ENCODE measurements at regions of chr1 and their contacts with region 1.

Region 1: DNA sequence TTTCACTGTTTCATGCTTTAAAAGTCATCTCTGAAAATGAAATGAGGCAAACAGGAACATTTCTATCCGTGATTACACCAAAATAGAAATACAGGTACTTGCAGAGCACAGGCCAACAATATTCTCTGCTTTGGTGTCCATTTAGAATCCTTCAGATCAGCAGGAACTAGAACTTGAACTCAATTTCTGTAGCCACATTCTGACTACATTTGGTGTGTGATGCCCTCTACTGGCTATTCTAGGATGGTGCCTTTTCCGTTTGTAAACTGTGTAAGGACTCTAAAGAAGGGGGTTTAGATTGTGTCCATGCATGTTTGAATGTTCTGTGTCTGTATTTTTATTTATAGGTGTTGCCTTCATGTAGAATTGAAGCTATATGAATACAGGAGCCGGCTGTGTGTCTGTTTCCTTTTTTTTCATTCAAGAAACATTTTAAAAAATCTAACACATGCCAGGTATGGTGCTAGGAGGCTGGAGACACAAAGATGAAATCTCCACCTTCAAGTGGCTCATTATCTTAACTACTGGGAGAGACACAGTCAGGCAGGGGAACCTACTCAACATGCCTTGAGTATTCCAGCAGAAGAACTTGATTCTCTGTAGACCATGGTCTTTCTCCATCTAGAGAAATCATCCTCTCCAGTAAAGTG is 7.6 kb upstream of the ZNF326 start:
- DNase-seq: peak; percentile 65 to 76
- H3K4me3 ChIP-seq: no peak overlapping the region
- H3K4me1 ChIP-seq: peaks cover 8% of the 10 kb centered on the region
- H3K27me3 ChIP-seq: no peaks in the 10 kb centered on the region

Region 2: DNA sequence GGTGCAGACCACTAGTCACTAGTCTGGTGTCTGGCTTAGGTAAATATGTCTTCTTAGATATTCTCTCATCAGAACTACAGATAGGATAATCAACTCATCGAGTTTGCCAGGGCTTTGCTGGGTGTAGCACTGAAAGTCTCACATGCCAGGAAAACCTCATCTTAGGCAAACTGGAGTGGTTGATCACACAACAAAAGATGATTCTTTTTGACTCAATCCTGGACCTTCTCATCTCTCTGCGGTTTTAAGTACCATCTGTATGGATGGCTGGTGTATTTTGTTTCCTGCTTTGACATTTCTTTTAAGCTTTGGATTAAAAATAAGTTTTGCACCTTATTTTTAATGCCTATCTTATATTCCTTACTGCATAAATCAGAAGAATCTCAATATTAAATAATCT is 872.6 kb before region 1 on chr1:
- in situ Hi-C with region 1: no loop called
- DNase-seq: no peak
- H3K4me3 ChIP-seq: no peak overlapping the region
- H3K4me1 ChIP-seq: no peaks in the 10 kb centered on the region
- H3K27me3 ChIP-seq: peaks cover 9% of the 10 kb centered on the region

Region 3: DNA sequence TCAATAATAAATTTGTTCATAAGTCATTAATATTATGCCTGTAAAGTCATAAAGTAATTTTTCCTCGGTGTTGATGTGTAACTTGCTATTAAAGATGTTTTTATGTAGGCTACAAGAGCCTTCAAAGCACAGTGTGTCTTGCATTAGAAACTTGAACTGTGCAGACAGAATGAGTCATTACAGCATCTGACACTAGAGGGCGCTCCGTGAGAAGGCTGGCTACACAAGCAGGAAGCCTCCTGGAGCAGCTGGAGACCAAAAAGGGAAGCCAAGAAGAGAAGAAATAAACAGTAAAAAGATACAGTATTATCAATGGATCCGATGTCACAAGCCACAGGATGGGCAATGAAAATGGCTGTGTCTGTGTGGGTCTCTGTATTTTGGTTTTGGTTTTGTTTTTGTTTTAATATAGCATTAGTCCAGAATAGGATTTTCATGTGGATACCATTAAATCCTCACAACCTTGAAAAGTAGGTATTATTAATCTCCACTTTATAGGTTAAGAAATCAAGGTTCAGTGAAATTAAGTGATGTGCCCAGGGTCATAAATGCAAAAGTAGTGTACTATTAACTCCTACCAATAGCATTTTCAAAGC is 182.6 kb before region 1 on chr1:
- in situ Hi-C with region 1: loop called (anchors 5 kb)
- DNase-seq: peak; percentile 63 to 93
- H3K4me3 ChIP-seq: no peak overlapping the region
- H3K4me1 ChIP-seq: peaks cover 21% of the 10 kb centered on the region
- H3K27me3 ChIP-seq: no peaks in the 10 kb centered on the region

Region 4: DNA sequence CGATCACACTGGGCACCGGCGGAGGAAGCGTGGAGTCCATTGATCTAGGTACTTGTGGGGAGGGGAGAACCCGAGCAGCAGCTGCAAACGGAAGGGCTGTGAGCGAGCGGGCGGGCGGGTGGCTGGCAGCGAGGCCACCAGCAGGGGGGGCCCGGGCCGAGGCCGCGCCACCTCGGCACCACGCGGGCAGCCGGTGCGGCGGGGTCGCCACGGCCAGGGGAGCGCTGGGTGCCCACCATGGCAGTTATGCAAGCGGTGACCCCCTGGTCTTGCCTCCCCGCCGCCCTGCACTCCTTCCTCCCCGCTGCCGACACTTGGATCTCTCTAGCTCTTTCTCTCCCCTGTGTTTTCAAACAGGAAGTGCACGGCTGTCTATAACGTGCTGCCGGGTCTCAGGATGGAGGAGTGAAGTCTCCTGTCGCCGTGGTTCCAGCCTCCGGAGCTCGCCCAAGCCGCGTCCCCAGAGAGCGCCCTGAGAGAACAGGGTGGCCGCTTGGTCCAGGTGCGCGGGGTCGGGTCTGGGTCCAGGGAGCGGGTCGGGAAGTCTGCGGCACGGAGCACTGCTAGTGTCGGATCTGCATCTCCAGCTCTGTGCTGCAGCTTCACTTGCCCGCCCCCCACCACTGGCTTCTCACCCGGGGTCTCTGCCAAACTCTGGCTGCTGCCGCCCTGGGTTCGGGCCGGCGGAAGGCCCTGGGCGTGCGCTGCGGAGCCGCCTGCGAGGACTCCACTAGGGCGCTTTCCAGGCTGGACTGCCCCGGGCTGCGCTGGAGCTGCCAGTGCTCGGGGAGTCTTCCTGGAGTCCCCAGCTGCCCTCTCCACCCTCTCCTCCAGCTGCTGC is 143.8 kb before region 1 on chr1:
- in situ Hi-C with region 1: loop called (anchors 10 kb)
- DNase-seq: peak; percentile 69 to 82
- H3K4me3 ChIP-seq: peak overlapping the region; percentile 38
- H3K4me1 ChIP-seq: peaks cover 23% of the 10 kb centered on the region
- H3K27me3 ChIP-seq: no peaks in the 10 kb centered on the region

Region 5: DNA sequence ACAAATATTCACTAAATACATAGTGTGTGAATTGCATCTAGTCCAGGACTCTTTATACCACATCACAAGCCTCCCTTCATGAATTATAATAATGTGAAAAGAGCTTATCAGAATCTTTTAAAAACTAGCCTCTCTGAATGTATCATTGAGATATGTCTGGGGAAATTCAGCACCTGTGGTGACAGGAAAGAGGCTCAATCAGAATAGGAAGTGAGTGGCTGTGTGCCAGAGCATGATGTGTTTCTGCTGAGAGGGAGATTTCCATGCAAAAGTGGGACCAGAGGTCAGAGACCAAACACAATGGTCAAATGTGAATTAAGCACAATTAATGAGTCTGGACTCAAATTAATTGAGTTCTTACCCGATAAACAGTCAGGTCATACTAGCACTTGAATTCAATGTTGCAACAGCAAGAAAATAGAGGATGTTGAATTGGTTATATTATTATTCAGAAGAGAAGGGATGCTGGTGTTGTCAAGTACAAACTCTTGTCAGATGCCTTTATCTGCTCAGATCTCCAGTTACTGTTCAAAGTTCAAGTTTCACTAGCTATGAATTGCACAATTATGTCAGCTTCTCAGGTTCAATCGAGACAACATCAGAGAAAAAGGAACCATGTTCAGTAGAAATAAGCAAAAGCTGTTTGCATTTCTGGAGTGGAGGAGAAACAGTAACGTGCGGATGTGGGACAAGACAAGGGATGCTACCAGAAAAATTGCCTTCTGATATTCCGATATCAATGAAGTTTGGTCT is 233.8 kb after region 1 on chr1:
- in situ Hi-C with region 1: no loop called
- DNase-seq: no peak
- H3K4me3 ChIP-seq: no peak overlapping the region
- H3K4me1 ChIP-seq: no peaks in the 10 kb centered on the region
- H3K27me3 ChIP-seq: no peaks in the 10 kb centered on the region

Region 6: GRCh38 chr1:90671741-90672140 is 684.4 kb after region 1 on chr1:
- in situ Hi-C with region 1: no loop called
- DNase-seq: no peak
- H3K4me3 ChIP-seq: no peak overlapping the region
- H3K4me1 ChIP-seq: no peaks in the 10 kb centered on the region; the same call in 1 of the 2 replicates
- H3K27me3 ChIP-seq: no peaks in the 10 kb centered on the region

Measured in HAP-1 (cell line).